ENCODE measurements at regions of chr9 and their contacts with region 1.

Region 1: GRCh38 chr9:112379177-112380101 is 469 bp upstream of the HSDL2 start:
- DNase-seq: peak; percentile 98

Region 2: DNA sequence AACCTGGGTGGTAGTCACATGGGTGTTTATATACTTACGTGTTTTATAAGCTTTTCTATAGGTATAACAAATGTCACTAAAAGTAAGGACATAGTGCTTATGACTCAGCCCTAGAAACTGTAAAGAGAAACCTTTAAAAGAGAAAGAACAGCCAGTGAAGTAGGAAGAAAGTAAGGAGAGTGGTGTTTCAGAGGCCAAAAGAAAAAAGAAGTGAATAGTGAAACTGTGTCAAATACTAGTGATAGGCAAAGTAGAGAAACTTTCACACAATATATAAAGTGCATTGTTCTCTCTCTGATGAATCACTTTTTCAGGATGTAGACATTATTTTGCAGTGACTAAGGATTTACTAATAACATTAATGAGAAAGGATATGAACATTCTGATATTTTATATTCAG is 130.2 kb before region 1 on chr9:
- CTCF ChIA-PET with region 1: no interaction called
- POLR2A ChIA-PET with region 1: no interaction called
- DNase-seq: no peak

Region 3: GRCh38 chr9:112361601-112362000 is 17.8 kb before region 1 on chr9:
- CTCF ChIA-PET with region 1: no interaction called
- POLR2A ChIA-PET with region 1: interaction called, 10 read pairs
- DNase-seq: peak; percentile 18

Region 4: DNA sequence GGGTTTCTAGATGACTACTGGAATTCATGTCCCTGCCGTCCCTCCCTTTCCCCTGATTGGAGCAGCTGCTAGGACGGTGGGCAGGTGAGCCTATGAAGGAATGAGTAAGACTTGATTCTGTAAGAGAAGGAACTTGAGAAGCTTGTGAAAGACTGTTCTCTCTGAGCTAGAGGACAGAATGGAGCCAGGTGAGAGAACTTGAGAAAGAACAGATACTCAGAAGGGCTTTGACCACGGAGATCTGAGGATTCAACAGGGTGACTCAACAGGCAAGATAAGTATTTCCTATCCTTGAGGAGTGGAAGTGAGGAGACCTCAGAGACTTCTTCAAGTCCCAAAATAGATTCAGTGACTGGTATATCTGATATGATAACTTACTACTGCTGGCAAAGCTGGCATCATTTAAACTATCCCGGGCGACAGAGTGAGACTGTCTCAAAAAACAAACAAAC is 42.4 kb after region 1 on chr9:
- CTCF ChIA-PET with region 1: interaction called, 12 read pairs
- POLR2A ChIA-PET with region 1: interaction called, 3 read pairs
- DNase-seq: no peak

Region 5: DNA sequence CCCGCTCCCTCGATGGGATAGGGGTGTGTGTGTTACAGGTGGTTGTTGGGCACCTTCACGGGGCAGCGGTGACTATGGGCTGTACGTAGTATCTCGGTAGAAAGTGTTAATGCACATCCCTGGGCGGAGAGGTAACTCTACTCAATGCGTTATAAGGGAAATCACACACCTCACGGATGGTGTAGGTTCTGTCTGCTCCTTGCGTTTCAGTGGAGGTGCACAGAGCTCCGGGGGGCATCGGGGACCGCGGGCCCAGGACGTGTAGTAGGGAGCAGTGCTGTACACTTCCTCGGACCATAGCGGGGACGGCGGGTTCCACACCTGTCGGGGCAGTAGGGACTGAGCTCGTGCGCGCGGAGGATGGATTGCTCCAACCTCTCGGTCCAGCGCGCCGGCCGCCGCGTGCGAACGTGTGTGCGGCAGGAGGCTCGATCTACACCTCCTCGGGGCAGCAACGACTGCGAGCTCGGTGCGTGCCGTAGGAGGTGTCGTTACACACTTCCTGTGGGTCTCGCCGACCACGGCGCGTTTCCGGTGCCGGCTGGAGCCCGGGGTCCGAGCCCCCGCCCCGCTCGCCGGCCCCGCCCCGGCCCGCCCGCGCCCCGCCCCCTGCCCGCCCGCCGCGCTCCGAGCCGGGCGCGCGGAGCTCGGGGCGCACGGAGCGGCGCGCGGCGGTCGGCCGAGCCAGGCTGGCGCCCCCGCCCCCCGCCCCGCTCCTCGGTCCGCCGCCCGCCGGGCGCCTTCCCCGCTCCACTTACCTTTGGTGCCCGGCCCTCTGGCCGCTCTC is 107.0 kb after region 1 on chr9 and contains the start of gene KIAA1958:
- CTCF ChIA-PET with region 1: no interaction called
- POLR2A ChIA-PET with region 1: interaction called, 25 read pairs
- DNase-seq: peak; percentile 90

Measured in HEK293T (cell line).